Activated CD4-positive, alpha-beta memory T cell treated with anti-CD3 and anti-CD28 coated beads for 36 hours (primary cell): ENCODE measurements at regions of chr12 and their contacts with region 1.

Region 1: DNA sequence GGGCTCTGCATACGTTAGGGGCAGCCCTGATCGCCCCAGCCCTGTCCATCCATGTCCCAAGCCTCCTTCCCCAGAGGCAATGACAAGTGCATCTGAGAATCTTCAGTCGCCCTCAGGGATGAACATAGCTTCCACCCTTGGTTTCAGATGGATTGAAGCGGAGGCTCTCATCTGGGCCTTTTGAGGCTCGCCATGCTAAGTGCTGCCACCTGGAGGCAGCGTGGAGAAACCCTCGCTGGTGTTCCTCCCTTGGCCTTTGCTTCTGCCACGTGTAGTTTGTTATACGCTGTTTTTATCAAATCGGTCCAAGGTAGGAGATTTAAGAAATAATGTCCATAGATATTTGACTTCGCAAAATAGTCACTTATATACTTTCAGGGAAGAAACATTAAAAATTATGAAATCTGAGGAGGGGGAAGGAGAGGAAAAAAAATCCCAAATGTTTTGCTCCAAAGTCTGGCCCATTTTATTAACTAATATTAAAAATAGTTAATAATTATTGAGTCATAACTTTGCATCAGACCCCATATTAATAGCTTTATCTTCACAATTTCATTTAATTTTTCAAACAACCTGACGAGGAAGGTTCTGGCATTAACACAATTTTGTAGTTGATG is 28.8 kb upstream of the LRRC10 start:
- DNase-seq: peak; percentile 73
- H3K4me3 Mint-ChIP-seq: no peak overlapping the region
- H3K27ac Mint-ChIP-seq: no peak overlapping the region
- H3K4me1 Mint-ChIP-seq: no peaks in the 10 kb centered on the region
- H3K27me3 Mint-ChIP-seq: no peaks in the 10 kb centered on the region

Region 2: GRCh38 chr12:69290545-69291277 is 348.8 kb before region 1 on chr12:
- CTCF ChIA-PET with region 1: interaction called, 12 read pairs
- POLR2A ChIA-PET with region 1: no interaction called
- intact Hi-C with region 1: loop called (anchors 1 kb)
- DNase-seq: peak; percentile 87
- H3K4me3 Mint-ChIP-seq: no peak overlapping the region
- H3K27ac Mint-ChIP-seq: no peak overlapping the region
- H3K4me1 Mint-ChIP-seq: peaks cover 7% of the 10 kb centered on the region
- H3K27me3 Mint-ChIP-seq: peaks cover 15% of the 10 kb centered on the region

Region 3: GRCh38 chr12:69354556-69355187 is 284.8 kb before region 1 on chr12:
- CTCF ChIA-PET with region 1: interaction called, 48 read pairs
- POLR2A ChIA-PET with region 1: no interaction called
- intact Hi-C with region 1: loop called (anchors 1 kb)
- DNase-seq: no peak
- H3K4me3 Mint-ChIP-seq: no peak overlapping the region
- H3K27ac Mint-ChIP-seq: no peak overlapping the region
- H3K4me1 Mint-ChIP-seq: peaks cover 17% of the 10 kb centered on the region
- H3K27me3 Mint-ChIP-seq: no peaks in the 10 kb centered on the region

Region 4: GRCh38 chr12:69627501-69627900 is 12.0 kb before region 1 on chr12:
- CTCF ChIA-PET with region 1: interaction called, 11 read pairs
- POLR2A ChIA-PET with region 1: no interaction called
- intact Hi-C with region 1: no loop called
- DNase-seq: no peak
- H3K4me3 Mint-ChIP-seq: no peak overlapping the region
- H3K27ac Mint-ChIP-seq: no peak overlapping the region
- H3K4me1 Mint-ChIP-seq: peaks cover 3% of the 10 kb centered on the region
- H3K27me3 Mint-ChIP-seq: no peaks in the 10 kb centered on the region

Region 5: DNA sequence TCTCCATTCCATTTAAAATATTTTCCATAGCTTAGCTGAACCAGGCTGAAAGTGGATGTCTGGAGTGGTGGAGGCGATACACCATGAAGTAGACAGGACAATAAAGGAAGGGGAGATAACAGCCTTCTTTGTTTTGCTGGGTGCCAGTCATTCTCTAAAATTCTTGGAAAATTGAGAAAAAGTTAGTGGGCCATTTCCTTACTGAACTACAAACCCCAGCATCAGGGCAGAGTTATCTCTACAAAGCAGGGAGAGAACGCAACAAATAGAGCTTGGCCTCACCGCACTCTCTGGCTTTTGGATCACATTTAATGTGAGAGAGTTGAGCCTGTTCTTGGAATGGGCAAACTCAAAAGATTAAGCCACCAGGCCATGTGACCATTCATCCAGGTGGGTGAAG is 12.4 kb after region 1 on chr12:
- CTCF ChIA-PET with region 1: interaction called, 15 read pairs
- POLR2A ChIA-PET with region 1: no interaction called
- intact Hi-C with region 1: no loop called
- DNase-seq: no peak
- H3K4me3 Mint-ChIP-seq: no peak overlapping the region
- H3K27ac Mint-ChIP-seq: no peak overlapping the region
- H3K4me1 Mint-ChIP-seq: no peaks in the 10 kb centered on the region
- H3K27me3 Mint-ChIP-seq: peaks cover 7% of the 10 kb centered on the region